ENCODE measurements at regions of chr11 and their contacts with region 1.

Region 1: GRCh38 chr11:85826116-85826855 is 15.3 kb upstream of the SYTL2 start:
- DNase-seq: peak; percentile 47
- H3K4me3 Mint-ChIP-seq: no peak overlapping the region
- H3K27ac Mint-ChIP-seq: peak overlapping the region; percentile 2
- H3K4me1 Mint-ChIP-seq: peaks cover 67% of the 10 kb centered on the region
- H3K27me3 Mint-ChIP-seq: peaks cover 5% of the 10 kb centered on the region

Region 2: GRCh38 chr11:85647604-85648299 is 178.5 kb before region 1 on chr11 and contains the start of gene TMEM126A:
- CTCF ChIA-PET with region 1: no interaction called
- DNase-seq: peak; percentile 94
- H3K4me3 Mint-ChIP-seq: peak within 1 kb of the TSS; percentile 90
- H3K27ac Mint-ChIP-seq: peak within 1 kb of the TSS; percentile 95
- H3K4me1 Mint-ChIP-seq: peaks cover 38% of the 10 kb centered on the region
- H3K27me3 Mint-ChIP-seq: peaks cover 23% of the 10 kb centered on the region

Region 3: GRCh38 chr11:85694386-85694980 is 131.8 kb before region 1 on chr11:
- CTCF ChIA-PET with region 1: interaction called, 22 read pairs
- DNase-seq: peak; percentile 27
- H3K4me3 Mint-ChIP-seq: no peak overlapping the region
- H3K27ac Mint-ChIP-seq: no peak overlapping the region
- H3K4me1 Mint-ChIP-seq: peaks cover 33% of the 10 kb centered on the region
- H3K27me3 Mint-ChIP-seq: no peaks in the 10 kb centered on the region

Region 4: GRCh38 chr11:85810871-85811611 is 15.2 kb before region 1 on chr11 and contains the start of gene SYTL2:
- CTCF ChIA-PET with region 1: interaction called, 26 read pairs
- DNase-seq: peak; percentile 84
- H3K4me3 Mint-ChIP-seq: peak within 1 kb of the TSS; percentile 90
- H3K27ac Mint-ChIP-seq: peak within 1 kb of the TSS; percentile 84
- H3K4me1 Mint-ChIP-seq: peaks cover 55% of the 10 kb centered on the region
- H3K27me3 Mint-ChIP-seq: peaks cover 25% of the 10 kb centered on the region

Region 5: GRCh38 chr11:85922367-85922766 is 96.1 kb after region 1 on chr11:
- CTCF ChIA-PET with region 1: no interaction called
- DNase-seq: no peak
- H3K4me3 Mint-ChIP-seq: no peak overlapping the region
- H3K27ac Mint-ChIP-seq: no peak overlapping the region
- H3K4me1 Mint-ChIP-seq: no peaks in the 10 kb centered on the region
- H3K27me3 Mint-ChIP-seq: peaks cover 10% of the 10 kb centered on the region